Activated naive CD4-positive, alpha-beta T cell treated with anti-CD3 and anti-CD28 coated beads for 36 hours (primary cell): ENCODE measurements at regions of chr5 and their contacts with region 1.

Region 1: DNA sequence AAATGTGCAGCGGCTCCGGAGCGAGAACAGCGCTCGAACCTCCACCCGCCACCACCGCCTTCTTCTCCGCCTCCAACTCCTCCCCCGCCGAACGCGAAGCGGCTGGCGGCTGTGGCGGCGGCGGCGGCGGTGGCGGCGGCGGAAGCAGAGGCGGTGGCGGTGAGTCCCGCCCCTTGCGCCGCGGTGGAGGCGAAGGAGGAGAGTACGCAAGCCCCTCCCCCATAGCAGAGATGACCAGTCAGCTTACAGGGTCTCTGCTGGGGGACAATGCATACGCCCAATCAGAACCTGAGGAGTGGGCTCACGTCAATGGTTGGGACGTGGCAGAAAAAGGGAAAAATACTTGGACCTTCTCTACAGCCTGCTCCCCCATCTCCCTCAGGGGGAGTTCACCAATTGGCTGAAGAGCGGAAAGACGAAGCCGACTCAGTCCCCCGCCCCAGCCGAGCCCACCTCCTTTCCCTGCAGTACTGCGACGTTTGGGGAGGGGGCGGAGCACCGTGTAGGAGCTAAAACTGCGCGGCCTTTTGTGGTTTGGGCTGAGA is at the start of gene PJA2:
- DNase-seq: peak; percentile 99
- H3K4me3 Mint-ChIP-seq: peak within 1 kb of the TSS; percentile 97
- H3K27ac Mint-ChIP-seq: peak within 1 kb of the TSS; percentile 100
- H3K4me1 Mint-ChIP-seq: peaks cover 46% of the 10 kb centered on the region
- H3K27me3 Mint-ChIP-seq: no peaks in the 10 kb centered on the region
- total RNA-seq, gene PJA2: 53.1 to 56.9 TPM

Region 2: GRCh38 chr5:108748401-108749127 is 661.4 kb before region 1 on chr5:
- CTCF ChIA-PET with region 1: interaction called, 3 read pairs
- intact Hi-C with region 1: loop called (anchors 1 kb)
- DNase-seq: peak; percentile 98
- H3K4me3 Mint-ChIP-seq: peak overlapping the region; percentile 85
- H3K27ac Mint-ChIP-seq: peak overlapping the region; percentile 88
- H3K4me1 Mint-ChIP-seq: peaks cover 17% of the 10 kb centered on the region
- H3K27me3 Mint-ChIP-seq: no peaks in the 10 kb centered on the region

Region 3: GRCh38 chr5:109516390-109516789 is 106.5 kb after region 1 on chr5:
- CTCF ChIA-PET with region 1: no interaction called
- intact Hi-C with region 1: no loop called
- DNase-seq: no peak
- H3K4me3 Mint-ChIP-seq: no peak overlapping the region
- H3K27ac Mint-ChIP-seq: no peak overlapping the region
- H3K4me1 Mint-ChIP-seq: no peaks in the 10 kb centered on the region
- H3K27me3 Mint-ChIP-seq: no peaks in the 10 kb centered on the region

Region 4: DNA sequence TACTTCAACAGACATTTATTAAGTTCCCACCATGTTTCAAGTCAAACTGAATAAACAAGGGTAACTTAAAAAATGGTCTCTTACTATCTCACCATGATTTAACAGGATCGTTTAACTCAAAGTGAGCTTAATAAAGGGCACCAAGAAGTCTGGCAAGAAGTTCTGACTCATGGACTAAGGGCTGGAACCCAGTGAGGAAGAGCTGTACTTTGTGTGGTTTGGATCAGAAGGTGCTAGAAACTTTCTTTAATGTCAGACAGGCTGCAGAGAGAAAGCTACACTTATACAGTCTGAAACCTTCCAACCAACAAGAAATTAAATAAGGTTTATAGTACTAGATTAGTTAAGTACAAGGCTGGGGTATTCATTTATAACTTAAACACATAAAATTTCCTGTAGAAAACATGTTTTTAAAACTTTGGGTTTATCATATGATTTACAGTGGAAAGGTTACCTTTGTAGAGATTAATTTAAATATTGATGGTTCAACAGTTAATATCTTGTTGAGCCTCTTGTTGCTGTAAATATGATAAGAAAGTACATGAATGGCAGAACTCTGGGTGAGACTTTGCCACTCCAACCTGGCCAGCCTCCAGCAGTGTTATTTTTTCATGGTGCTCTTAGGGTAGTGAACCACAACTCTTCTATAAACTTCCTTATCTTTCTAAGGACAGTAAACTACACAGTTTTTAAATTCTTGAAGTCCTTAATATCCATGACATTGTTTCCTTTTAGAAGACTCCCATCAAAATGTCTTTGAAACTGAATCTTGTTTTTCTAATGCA is 442.6 kb after region 1 on chr5:
- CTCF ChIA-PET with region 1: no interaction called
- intact Hi-C with region 1: loop called (anchors 2 kb)
- DNase-seq: peak; percentile 30
- H3K4me3 Mint-ChIP-seq: no peak overlapping the region
- H3K27ac Mint-ChIP-seq: peak overlapping the region; percentile 54
- H3K4me1 Mint-ChIP-seq: peaks cover 75% of the 10 kb centered on the region
- H3K27me3 Mint-ChIP-seq: no peaks in the 10 kb centered on the region

Region 5: GRCh38 chr5:110054240-110054639 is 644.3 kb after region 1 on chr5:
- CTCF ChIA-PET with region 1: no interaction called
- intact Hi-C with region 1: loop called (anchors 1 kb)
- DNase-seq: peak; percentile 91
- H3K4me3 Mint-ChIP-seq: peak overlapping the region; percentile 12
- H3K27ac Mint-ChIP-seq: peak overlapping the region; percentile 87
- H3K4me1 Mint-ChIP-seq: peaks cover 37% of the 10 kb centered on the region
- H3K27me3 Mint-ChIP-seq: no peaks in the 10 kb centered on the region

Region 6: GRCh38 chr5:110738812-110739651 is 1329.1 kb after region 1 on chr5 and contains the start of gene SLC25A46:
- CTCF ChIA-PET with region 1: no interaction called
- intact Hi-C with region 1: loop called (anchors 2 kb)
- DNase-seq: peak; percentile 89
- H3K4me3 Mint-ChIP-seq: peak within 1 kb of the TSS; percentile 96
- H3K27ac Mint-ChIP-seq: peak within 1 kb of the TSS; percentile 86
- H3K4me1 Mint-ChIP-seq: peaks cover 25% of the 10 kb centered on the region
- H3K27me3 Mint-ChIP-seq: peaks cover 8% of the 10 kb centered on the region
- total RNA-seq, gene SLC25A46: 26.1 to 27.2 TPM

Region 7: GRCh38 chr5:111099058-111099778 is 1689.3 kb after region 1 on chr5:
- CTCF ChIA-PET with region 1: no interaction called
- intact Hi-C with region 1: no loop called
- DNase-seq: no peak
- H3K4me3 Mint-ChIP-seq: no peak overlapping the region
- H3K27ac Mint-ChIP-seq: no peak overlapping the region
- H3K4me1 Mint-ChIP-seq: peaks cover 26% of the 10 kb centered on the region
- H3K27me3 Mint-ChIP-seq: no peaks in the 10 kb centered on the region